T-cell (primary cell): ENCODE measurements at regions of chr17 and their contacts with region 1.

Region 1: DNA sequence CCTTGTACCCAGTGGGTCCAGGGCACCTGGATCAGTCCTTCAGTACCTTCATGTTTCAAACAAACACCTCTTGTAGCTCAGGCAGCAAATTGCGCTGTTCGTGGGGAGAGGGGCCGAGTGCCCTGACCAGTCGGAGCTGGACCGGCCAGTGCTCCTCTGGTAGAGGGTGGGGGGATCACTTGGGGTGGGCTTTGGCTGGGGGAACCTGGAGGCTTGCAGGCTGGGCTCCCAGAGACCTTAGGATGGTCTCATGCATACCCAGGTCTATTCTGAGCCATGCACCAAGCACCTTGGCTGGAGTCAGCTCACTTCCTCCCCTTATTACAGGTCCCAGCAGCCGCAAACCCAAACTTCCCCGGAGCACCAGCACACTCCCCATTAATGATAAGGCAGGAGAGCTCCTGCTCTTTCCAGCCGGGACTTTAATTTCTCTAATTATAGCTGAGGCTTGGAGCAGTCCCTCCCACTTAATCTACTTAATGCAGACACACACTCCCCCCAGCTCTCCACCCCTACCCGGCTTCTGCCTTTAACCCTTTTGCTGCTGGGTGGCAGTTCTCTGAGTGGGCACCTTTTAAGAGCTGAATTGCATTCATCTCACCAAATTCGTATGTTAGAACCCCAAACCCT is 26.3 kb upstream of the MGAT5B start:
- DNase-seq: peak in 1 of 35 experiments; percentile 1
- ATAC-seq: no peak
- H3K4me3 ChIP-seq: no peak overlapping the region
- H3K4me3 Mint-ChIP-seq: no peak overlapping the region
- H3K27ac ChIP-seq: no peak overlapping the region
- H3K27ac Mint-ChIP-seq: no peak overlapping the region
- H3K4me1 ChIP-seq: peaks cover 0 to 16% of the 10 kb centered on the region in 2 experiments
- H3K4me1 Mint-ChIP-seq: peaks cover 13 to 20% (median 18%) of the 10 kb centered on the region in 3 donors
- H3K27me3 ChIP-seq: peaks cover 3 to 55% of the 10 kb centered on the region in 2 experiments
- H3K27me3 Mint-ChIP-seq: peaks cover 46 to 62% of the 10 kb centered on the region in 2 donors

Region 2: GRCh38 chr17:76893623-76894334 is 51.9 kb after region 1 on chr17:
- CTCF ChIA-PET with region 1: no interaction called
- POLR2A ChIA-PET with region 1: no interaction called
- DNase-seq: no peak
- ATAC-seq: no peak
- H3K4me3 ChIP-seq: no peak overlapping the region
- H3K4me3 Mint-ChIP-seq: no peak overlapping the region
- H3K27ac ChIP-seq: no peak overlapping the region
- H3K27ac Mint-ChIP-seq: no peak overlapping the region
- H3K4me1 ChIP-seq: no peaks in the 10 kb centered on the region
- H3K4me1 Mint-ChIP-seq: no peaks in the 10 kb centered on the region
- H3K27me3 ChIP-seq: peaks cover 0 to 8% of the 10 kb centered on the region in 2 experiments
- H3K27me3 Mint-ChIP-seq: no peaks in the 10 kb centered on the region

Region 3: GRCh38 chr17:77564278-77564920 is 722.5 kb after region 1 on chr17:
- CTCF ChIA-PET with region 1: interaction called in 1 of 2 experiments, 10 read pairs
- POLR2A ChIA-PET with region 1: no interaction called
- DNase-seq: no peak
- ATAC-seq: no peak
- H3K4me3 ChIP-seq: no peak overlapping the region
- H3K4me3 Mint-ChIP-seq: no peak overlapping the region
- H3K27ac ChIP-seq: no peak overlapping the region
- H3K27ac Mint-ChIP-seq: no peak overlapping the region
- H3K4me1 ChIP-seq: no peaks in the 10 kb centered on the region
- H3K4me1 Mint-ChIP-seq: no peaks in the 10 kb centered on the region
- H3K27me3 ChIP-seq: peaks cover 0 to 21% of the 10 kb centered on the region in 2 experiments
- H3K27me3 Mint-ChIP-seq: peaks cover 8 to 11% of the 10 kb centered on the region in 2 donors